IMR-90 (cell line): ENCODE measurements at regions of chr1 and their contacts with region 1.

Region 1: GRCh38 chr1:220281159-220281574 is 8.9 kb upstream of the RAB3GAP2 start:
- DNase-seq: peak; percentile 33
- ATAC-seq: peak; percentile 71
- H3K4me3 ChIP-seq: no peak overlapping the region
- H3K27ac ChIP-seq: no peak overlapping the region
- H3K4me1 ChIP-seq: no peaks in the 10 kb centered on the region
- H3K27me3 ChIP-seq: peaks cover 19% of the 10 kb centered on the region
- CTCF ChIP-seq: peak; percentile 53
- POLR2A ChIP-seq: no peak
- RAD21 ChIP-seq: peak; percentile 63

Region 2: DNA sequence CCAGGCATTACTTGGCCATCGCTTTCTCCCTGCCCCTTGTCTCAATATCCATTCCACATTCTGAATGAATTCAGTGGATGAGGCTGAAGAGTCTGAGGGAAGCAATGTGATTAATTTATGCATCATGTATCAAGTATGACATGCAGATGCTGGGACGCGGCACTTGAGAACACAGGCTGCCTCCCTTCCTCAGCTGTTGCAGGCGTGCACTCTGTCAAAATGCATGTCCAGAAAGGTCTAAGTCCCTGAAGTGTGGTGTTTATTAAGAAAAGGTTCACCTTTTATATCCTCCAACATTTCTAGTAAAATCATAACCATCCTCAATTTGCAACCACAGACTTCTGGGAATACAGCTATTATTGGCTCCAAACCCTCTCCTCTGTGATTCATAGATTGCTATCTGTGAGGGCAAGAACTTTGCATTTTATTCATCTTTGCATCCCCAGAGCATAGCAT is 13.7 kb after region 1 on chr1:
- CTCF ChIA-PET with region 1: interaction called, 4 read pairs
- POLR2A ChIA-PET with region 1: no interaction called
- dilution Hi-C with region 1: no loop called
- in situ Hi-C with region 1: no loop called
- intact Hi-C with region 1: loop called (anchors 1 kb)
- DNase-seq: no peak
- ATAC-seq: no peak
- H3K4me3 ChIP-seq: no peak overlapping the region
- H3K27ac ChIP-seq: no peak overlapping the region
- H3K4me1 ChIP-seq: no peaks in the 10 kb centered on the region
- H3K27me3 ChIP-seq: peaks cover 8% of the 10 kb centered on the region; the same call in 1 of the 2 replicates
- CTCF ChIP-seq: no peak
- POLR2A ChIP-seq: no peak
- RAD21 ChIP-seq: no peak

Region 3: GRCh38 chr1:220344745-220345144 is 63.6 kb after region 1 on chr1:
- CTCF ChIA-PET with region 1: no interaction called
- POLR2A ChIA-PET with region 1: no interaction called
- dilution Hi-C with region 1: no loop called
- in situ Hi-C with region 1: no loop called
- intact Hi-C with region 1: no loop called
- DNase-seq: no peak
- ATAC-seq: no peak
- H3K4me3 ChIP-seq: no peak overlapping the region
- H3K27ac ChIP-seq: no peak overlapping the region
- H3K4me1 ChIP-seq: no peaks in the 10 kb centered on the region
- H3K27me3 ChIP-seq: no peaks in the 10 kb centered on the region
- CTCF ChIP-seq: no peak
- POLR2A ChIP-seq: no peak
- RAD21 ChIP-seq: no peak

Region 4: GRCh38 chr1:220579317-220579716 is 298.1 kb after region 1 on chr1:
- CTCF ChIA-PET with region 1: no interaction called
- POLR2A ChIA-PET with region 1: no interaction called
- dilution Hi-C with region 1: no loop called
- in situ Hi-C with region 1: no loop called
- intact Hi-C with region 1: loop called (anchors 10 kb)
- DNase-seq: no peak
- ATAC-seq: no peak
- H3K4me3 ChIP-seq: no peak overlapping the region
- H3K27ac ChIP-seq: no peak overlapping the region
- H3K4me1 ChIP-seq: no peaks in the 10 kb centered on the region
- H3K27me3 ChIP-seq: no peaks in the 10 kb centered on the region
- CTCF ChIP-seq: no peak
- POLR2A ChIP-seq: no peak
- RAD21 ChIP-seq: no peak

Region 5: GRCh38 chr1:220680085-220680687 is 399.0 kb after region 1 on chr1:
- CTCF ChIA-PET with region 1: no interaction called
- POLR2A ChIA-PET with region 1: no interaction called
- dilution Hi-C with region 1: no loop called
- in situ Hi-C with region 1: no loop called
- intact Hi-C with region 1: loop called (anchors 1 kb)
- DNase-seq: peak; percentile 19
- ATAC-seq: peak; percentile 87
- H3K4me3 ChIP-seq: no peak overlapping the region
- H3K27ac ChIP-seq: no peak overlapping the region
- H3K4me1 ChIP-seq: no peaks in the 10 kb centered on the region
- H3K27me3 ChIP-seq: no peaks in the 10 kb centered on the region
- CTCF ChIP-seq: peak; percentile 61
- POLR2A ChIP-seq: no peak
- RAD21 ChIP-seq: peak; percentile 56